Heart right ventricle (tissue), 16 donors: ENCODE measurements at regions of chr4 and their contacts with region 1.

Region 1: GRCh38 chr4:140153718-140154571 is at the start of gene MAML3:
- DNase-seq: peak; percentile 95
- ATAC-seq: peak; percentile 62 to 83 (median 74)
- H3K4me3 ChIP-seq: peak within 1 kb of the TSS; percentile 65 to 92 (median 84)
- H3K27ac ChIP-seq: peak within 1 kb of the TSS; percentile 85 to 100 (median 99)
- H3K4me1 ChIP-seq: peaks cover 0 to 44% (median 7%) of the 10 kb centered on the region in 9 donors
- H3K27me3 ChIP-seq: no peaks in the 10 kb centered on the region
- CTCF ChIP-seq: no peak
- total RNA-seq, gene MAML3: 1.3 to 4.6 (median 2.8) TPM

Region 2: DNA sequence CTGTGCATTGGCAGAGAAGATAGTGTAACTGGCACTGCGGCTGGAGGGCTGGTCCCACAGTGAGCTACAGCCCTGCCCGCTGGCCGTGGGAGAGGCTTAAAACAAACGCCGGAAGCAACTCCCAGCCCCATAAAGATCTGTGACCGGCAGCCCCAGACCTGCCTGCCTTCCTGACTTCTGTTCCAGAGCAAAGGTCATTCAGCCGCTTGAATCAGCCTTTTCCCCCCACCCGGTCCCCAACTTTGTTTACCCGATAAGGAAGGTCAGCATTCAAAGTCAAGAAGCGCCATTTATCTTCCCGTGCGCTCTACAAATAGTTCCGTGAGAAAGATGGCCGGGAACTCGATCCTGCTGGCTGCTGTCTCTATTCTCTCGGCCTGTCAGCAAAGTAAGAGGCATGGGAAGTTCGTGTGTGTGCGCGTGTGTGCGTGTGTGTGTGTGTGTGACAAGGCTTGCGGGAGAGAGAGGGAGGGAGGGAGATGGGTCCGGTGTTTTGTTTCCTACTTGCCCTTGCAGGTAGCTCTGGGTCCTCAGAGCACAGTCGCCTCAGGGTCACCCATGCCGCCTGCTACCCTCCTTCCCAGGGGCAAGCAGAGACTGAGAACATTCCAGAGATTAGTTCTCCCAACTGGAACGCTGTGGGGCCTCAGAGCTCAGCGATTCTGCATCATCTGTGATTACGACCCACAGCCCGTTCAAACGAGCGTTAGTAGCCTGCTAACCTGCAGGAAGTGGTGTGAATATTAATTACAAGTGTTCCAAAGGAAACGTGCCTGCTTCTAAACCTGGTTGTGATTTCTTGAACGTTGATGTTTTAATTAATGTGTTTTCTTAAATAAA is 488.0 kb before region 1 on chr4 and contains the start of gene MGST2:
- intact Hi-C with region 1: loop called in 1 of 10 experiments (anchors 5 kb)
- DNase-seq: peak; percentile 80 to 85
- ATAC-seq: peak; percentile 87 to 96 (median 94)
- H3K4me3 ChIP-seq: peak within 1 kb of the TSS; percentile 27 to 68 (median 58)
- H3K27ac ChIP-seq: peak within 1 kb of the TSS; percentile 74 to 95 (median 92)
- H3K4me1 ChIP-seq: peaks cover 0 to 70% (median 46%) of the 10 kb centered on the region in 9 donors
- H3K27me3 ChIP-seq: no peaks in the 10 kb centered on the region
- CTCF ChIP-seq: peak in 1 of 9 donors; percentile 7
- total RNA-seq, gene MGST2: 99.1 to 125 (median 107) TPM

Region 3: GRCh38 chr4:139934057-139934707 is 219.8 kb before region 1 on chr4:
- intact Hi-C with region 1: no loop called
- DNase-seq: no peak
- ATAC-seq: peak in 5 of 8 donors; percentile 27 to 62 (median 60)
- H3K4me3 ChIP-seq: no peak overlapping the region
- H3K27ac ChIP-seq: peak overlapping the region in 3 of 10 donors; percentile 5 to 47 (median 12)
- H3K4me1 ChIP-seq: peaks cover 0 to 22% (median 10%) of the 10 kb centered on the region in 9 donors
- H3K27me3 ChIP-seq: no peaks in the 10 kb centered on the region
- CTCF ChIP-seq: no peak

Region 4: DNA sequence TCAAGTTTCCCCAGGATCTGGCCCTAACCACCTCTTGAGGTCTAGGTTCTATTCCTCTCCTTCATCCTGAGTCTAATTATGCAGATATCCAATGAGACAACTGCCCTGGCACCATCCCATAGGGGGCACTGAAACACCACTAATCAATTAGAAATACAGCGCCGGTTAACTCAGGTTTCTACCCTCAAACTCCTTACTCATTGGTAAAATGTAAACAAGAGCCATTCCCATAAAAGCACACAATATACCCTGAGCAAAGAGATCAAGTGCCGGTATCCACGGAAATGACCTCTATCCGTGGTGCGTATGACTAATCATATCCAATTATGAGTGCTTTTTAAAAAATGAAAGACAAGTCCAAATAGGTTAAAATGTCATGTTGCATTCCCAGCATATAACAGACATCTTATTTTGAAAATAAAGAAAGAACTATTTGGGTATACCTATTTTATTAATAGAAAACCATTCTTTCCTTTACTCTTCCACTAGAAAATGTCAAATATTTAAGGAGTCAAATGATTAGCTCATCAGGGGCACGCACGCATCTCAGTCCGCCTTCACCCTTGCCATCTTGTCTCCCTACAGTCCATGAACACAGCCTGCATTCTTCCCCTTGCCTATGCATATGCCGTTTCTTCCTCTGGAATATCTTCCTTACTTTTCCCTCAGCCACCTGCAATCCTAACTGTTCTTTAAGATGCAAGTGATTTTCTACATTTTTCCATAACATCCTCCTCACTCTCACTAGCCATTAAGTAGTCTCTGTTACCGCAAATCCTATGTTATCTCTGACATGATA is 141.1 kb before region 1 on chr4:
- intact Hi-C with region 1: loop called in 2 of 10 experiments (anchors 5 to 10 kb)
- DNase-seq: peak; percentile 19 to 66
- ATAC-seq: peak; percentile 44 to 94 (median 89)
- H3K4me3 ChIP-seq: peak overlapping the region in 1 of 10 donors; percentile 17
- H3K27ac ChIP-seq: no peak overlapping the region
- H3K4me1 ChIP-seq: peaks cover 0 to 12% (median 0%) of the 10 kb centered on the region in 9 donors
- H3K27me3 ChIP-seq: no peaks in the 10 kb centered on the region
- CTCF ChIP-seq: peak; percentile 29 to 73 (median 65)

Region 5: DNA sequence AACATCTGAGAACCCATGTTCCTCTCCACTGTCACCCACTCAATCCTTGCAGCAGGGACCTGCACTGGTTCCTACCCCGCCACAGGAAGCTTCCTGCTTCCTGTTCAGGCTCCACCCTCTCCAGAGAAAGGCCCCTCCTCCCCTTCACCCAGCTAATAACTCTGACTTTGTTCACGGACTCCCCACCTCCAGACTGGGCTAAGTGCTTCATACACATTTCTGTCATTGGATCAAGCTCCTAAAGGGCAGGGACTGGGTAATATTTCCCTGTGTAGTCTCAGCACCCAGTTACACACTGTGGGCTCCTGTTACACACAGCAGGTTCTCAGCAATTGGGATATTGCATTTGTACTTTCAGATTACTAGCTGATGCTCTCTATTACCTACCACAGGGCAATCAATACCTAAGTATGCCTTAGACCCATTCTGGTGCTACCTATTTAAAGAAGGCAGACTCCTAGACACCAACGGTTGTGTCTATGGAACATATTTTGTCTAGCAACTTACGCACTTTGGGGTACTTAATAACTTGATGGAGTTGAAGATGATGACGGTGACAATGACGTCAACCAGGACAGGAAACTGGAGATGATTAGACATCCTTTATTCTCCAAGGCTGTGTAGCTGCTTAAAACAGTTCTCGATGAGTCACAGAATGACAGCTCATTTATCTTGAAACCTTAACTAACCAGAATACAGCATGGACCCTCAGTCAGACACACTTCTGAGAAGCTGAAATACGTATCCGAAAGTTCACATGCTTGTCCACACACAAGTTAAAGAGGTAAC is 58.1 kb before region 1 on chr4:
- intact Hi-C with region 1: loop called in 9 of 10 experiments (anchors 1 to 5 kb)
- DNase-seq: peak; percentile 23 to 72
- ATAC-seq: peak; percentile 21 to 77 (median 60)
- H3K4me3 ChIP-seq: peak overlapping the region in 3 of 10 donors; percentile 14 to 27 (median 26)
- H3K27ac ChIP-seq: peak overlapping the region; percentile 27 to 92 (median 82)
- H3K4me1 ChIP-seq: peaks cover 15 to 100% (median 86%) of the 10 kb centered on the region in 9 donors
- H3K27me3 ChIP-seq: no peaks in the 10 kb centered on the region
- CTCF ChIP-seq: no peak

Region 6: DNA sequence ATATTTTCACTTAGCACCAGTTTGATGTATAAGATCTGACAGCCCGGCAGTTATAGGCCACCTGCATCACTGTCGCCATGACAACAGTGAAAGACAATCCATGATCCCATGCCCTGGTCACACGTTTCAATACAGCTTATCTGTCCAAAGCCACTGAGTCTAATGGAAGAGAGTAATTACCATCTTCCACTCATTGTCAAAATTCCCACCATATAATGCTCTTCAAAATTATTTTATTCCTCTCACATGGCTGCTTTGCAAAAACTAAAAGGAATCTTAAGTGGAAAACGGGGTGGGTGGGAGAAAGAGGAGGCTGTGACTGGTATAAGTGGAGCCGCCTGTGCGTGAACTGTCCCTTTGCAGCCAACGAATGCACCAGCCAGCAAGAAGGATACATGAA is 44.2 kb before region 1 on chr4:
- intact Hi-C with region 1: no loop called
- DNase-seq: no peak
- ATAC-seq: no peak
- H3K4me3 ChIP-seq: no peak overlapping the region
- H3K27ac ChIP-seq: no peak overlapping the region
- H3K4me1 ChIP-seq: peaks cover 0 to 13% (median 0%) of the 10 kb centered on the region in 9 donors
- H3K27me3 ChIP-seq: no peaks in the 10 kb centered on the region
- CTCF ChIP-seq: no peak

Region 7: DNA sequence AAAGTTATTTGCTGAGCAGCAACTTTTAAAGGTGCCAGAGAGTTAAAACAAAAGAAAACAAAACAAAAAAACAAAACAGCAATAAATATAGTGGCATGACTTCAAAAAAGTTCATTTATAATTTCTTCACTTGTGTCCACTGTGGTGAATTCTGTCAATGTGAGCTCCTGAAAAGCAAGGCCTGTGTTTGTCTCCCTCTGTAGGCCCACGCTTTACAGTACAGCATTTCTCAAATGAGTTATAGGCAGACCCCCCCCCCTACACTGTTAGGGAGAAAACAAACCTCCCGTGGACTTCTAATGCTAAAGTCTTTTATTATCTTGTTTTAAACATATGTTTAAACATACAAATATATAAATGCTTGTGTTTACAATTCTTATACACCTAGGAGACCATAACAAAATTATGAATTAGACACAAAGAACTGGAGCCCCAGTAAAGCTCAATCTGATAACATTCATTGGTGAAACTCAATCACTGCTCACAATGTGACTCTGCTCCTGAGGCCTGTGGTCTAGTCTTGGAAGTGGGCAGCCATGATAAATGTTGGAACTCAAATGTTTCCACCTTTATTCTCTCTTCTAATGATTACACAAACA is 172.5 kb after region 1 on chr4:
- intact Hi-C with region 1: loop called in 1 of 10 experiments (anchors 10 kb)
- DNase-seq: peak in 1 of 2 donors; percentile 28
- ATAC-seq: peak in 5 of 8 donors; percentile 67 to 85 (median 70)
- H3K4me3 ChIP-seq: no peak overlapping the region
- H3K27ac ChIP-seq: no peak overlapping the region
- H3K4me1 ChIP-seq: peaks cover 0 to 9% (median 0%) of the 10 kb centered on the region in 9 donors
- H3K27me3 ChIP-seq: no peaks in the 10 kb centered on the region
- CTCF ChIP-seq: peak; percentile 36 to 81 (median 68)

Region 8: GRCh38 chr4:140373328-140374129 is 219.6 kb after region 1 on chr4 and contains the start of gene SCOC:
- intact Hi-C with region 1: no loop called
- DNase-seq: peak; percentile 98 to 99
- ATAC-seq: peak; percentile 98 to 100 (median 99)
- H3K4me3 ChIP-seq: peak within 1 kb of the TSS; percentile 72 to 96 (median 85)
- H3K27ac ChIP-seq: peak within 1 kb of the TSS; percentile 84 to 97 (median 94)
- H3K4me1 ChIP-seq: peaks cover 0 to 53% (median 42%) of the 10 kb centered on the region in 9 donors
- H3K27me3 ChIP-seq: no peaks in the 10 kb centered on the region
- CTCF ChIP-seq: no peak
- total RNA-seq, gene SCOC: 61.8 to 76.8 (median 67.0) TPM